WTC11 (cell line): ENCODE measurements at regions of chr5 and their contacts with region 1.

Region 1: DNA sequence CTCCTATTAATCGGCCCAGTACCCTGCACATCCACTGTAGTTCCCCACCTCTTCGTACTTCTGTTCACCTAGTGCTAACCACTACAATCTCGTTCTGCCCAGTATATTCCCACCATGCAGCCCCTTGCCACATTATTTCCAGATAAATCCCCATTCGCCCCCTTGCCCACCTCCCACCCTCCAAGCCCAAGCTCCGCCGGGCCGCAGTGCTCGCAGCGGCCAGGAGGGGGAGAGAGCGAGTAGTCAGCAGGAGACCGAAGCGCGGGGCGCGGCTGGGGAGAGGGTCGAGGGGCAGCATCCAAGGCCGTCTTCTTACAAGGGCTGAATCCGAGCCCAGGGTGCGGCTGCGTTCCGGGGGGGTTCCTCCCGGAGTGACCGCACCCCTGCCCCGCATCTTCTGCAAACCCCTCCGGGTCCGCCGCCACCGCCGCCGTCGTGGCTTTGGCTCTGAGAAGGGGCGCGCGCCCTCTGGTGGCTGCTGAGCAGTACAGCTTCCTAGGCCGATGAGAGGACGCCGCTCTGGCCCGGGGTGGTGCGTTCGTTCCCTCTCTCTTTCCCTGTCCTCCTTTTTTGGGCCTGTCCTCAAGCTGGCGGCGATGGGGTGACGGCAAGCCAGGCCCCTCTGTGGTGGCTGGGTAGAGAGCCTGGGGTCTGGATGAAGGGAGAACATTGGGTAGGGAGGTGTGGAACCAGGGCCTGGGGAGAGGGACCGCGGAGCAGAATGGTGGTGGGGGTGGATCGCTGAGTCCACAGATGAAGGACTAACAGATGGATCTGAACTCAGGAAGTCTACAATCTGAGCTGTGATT is 30.0 kb upstream of the PSD2 start:
- DNase-seq: peak; percentile 84
- ATAC-seq: peak; percentile 84
- H3K4me3 Mint-ChIP-seq: peak overlapping the region; percentile 61
- H3K27ac Mint-ChIP-seq: no peak overlapping the region
- H3K4me1 Mint-ChIP-seq: peaks cover 42% of the 10 kb centered on the region
- H3K27me3 Mint-ChIP-seq: peaks cover 52% of the 10 kb centered on the region
- CTCF ChIP-seq: peak; percentile 97

Region 2: DNA sequence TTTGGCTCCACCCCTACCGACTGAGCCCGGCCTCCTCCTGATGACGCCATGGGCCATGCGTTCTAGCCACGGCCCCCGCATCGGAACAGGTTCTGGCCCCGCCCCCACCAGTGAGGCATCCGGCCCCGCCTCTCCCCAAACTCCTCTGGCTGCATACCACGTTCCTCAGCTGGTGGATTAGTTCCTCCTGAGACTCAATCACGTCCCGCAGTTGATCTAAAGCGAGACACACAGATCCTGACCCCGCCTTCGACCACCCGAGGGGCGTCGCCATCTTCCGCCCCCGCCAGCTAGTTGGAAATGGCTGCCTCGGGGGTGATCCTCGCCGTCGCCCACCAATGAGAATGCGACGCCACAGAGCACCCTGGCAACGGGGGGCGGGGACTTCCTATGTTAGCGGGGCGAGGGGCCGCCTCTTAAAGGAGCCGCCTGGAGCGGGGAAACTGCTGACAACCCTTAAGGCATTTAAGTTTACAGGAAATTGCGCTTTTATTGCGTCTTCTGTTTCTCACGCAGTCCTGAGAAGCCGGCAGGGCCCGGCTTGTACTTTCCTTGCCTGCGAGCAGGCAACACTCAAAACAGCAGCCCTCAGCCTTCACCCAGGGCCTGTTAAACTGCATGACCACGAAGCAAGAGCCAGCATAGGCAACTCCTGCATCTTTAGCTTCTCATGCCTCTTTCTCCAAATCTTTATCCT is 361.7 kb before region 1 on chr5 and contains the start of gene SPATA24:
- CTCF ChIA-PET with region 1: interaction called, 10 read pairs
- POLR2A ChIA-PET with region 1: no interaction called
- DNase-seq: peak; percentile 98
- ATAC-seq: peak; percentile 93
- H3K4me3 Mint-ChIP-seq: peak within 1 kb of the TSS; percentile 94
- H3K27ac Mint-ChIP-seq: peak within 1 kb of the TSS; percentile 100
- H3K4me1 Mint-ChIP-seq: peaks cover 16% of the 10 kb centered on the region
- H3K27me3 Mint-ChIP-seq: no peaks in the 10 kb centered on the region
- CTCF ChIP-seq: no peak
- total RNA-seq, gene SPATA24: 12.9 to 13.9 TPM (median 13.2 TPM) in 3 replicates

Region 3: GRCh38 chr5:139651853-139652787 is 113.5 kb before region 1 on chr5:
- CTCF ChIA-PET with region 1: interaction called, 34 read pairs
- POLR2A ChIA-PET with region 1: interaction called, 3 read pairs
- DNase-seq: peak; percentile 92
- ATAC-seq: peak; percentile 33
- H3K4me3 Mint-ChIP-seq: peak overlapping the region; percentile 98
- H3K27ac Mint-ChIP-seq: peak overlapping the region; percentile 96
- H3K4me1 Mint-ChIP-seq: peaks cover 63% of the 10 kb centered on the region
- H3K27me3 Mint-ChIP-seq: no peaks in the 10 kb centered on the region
- CTCF ChIP-seq: no peak

Region 4: DNA sequence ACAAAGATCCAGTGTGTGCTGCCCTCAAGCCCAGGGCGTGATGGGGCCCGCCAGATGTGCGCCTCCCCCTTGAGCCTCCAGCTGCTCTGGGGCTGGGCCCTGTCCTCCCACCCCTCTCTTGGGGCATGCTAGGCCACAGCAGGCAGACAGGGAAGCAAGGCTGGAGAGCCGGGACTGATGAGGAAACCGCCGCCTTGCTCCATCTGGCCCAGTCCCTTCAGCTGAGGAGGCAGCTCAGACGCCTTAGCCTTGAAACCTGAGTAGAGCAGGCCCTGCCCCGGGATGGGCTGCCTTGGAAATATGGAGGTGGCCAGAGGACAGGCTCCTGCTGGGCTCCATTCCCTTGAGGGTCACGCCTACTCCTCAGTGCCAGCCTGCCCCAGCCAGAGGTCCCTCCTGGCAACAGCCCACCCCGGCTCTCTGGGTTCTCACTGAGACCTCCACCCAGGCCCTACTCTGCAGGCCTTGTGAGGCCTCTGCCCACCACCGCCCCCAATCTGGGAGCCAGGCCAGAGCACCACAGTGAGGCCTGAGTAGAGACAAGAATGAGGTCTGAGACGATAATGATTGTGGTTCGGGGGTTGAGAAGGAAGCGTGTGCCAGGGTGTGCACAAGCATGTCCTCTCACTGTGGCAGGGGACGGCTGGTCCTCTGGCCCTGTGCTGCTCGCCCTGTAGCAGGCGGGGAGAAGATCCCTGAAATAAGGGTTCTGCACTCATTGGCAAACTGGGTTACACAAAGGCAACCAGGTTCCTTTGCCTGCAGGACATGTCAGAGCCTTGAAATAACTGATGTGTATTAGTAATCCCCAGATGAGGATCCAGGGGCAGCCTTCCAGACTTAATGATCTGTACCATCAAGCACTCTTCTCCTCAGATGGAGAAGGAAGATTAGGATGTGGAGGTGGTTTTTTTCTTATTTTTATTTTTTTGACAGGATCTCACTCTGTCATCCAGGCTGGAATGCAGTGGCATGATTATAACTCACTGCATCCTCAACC is 86.6 kb before region 1 on chr5:
- CTCF ChIA-PET with region 1: interaction called, 30 read pairs
- POLR2A ChIA-PET with region 1: no interaction called
- DNase-seq: peak; percentile 38
- ATAC-seq: peak; percentile 50
- H3K4me3 Mint-ChIP-seq: no peak overlapping the region
- H3K27ac Mint-ChIP-seq: no peak overlapping the region
- H3K4me1 Mint-ChIP-seq: peaks cover 48% of the 10 kb centered on the region
- H3K27me3 Mint-ChIP-seq: no peaks in the 10 kb centered on the region
- CTCF ChIP-seq: no peak

Region 5: GRCh38 chr5:139696894-139697658 is 68.5 kb before region 1 on chr5:
- CTCF ChIA-PET with region 1: interaction called, 77 read pairs
- POLR2A ChIA-PET with region 1: no interaction called
- DNase-seq: peak; percentile 77
- ATAC-seq: peak; percentile 23
- H3K4me3 Mint-ChIP-seq: peak overlapping the region; percentile 66
- H3K27ac Mint-ChIP-seq: peak overlapping the region; percentile 88; the same call in 1 of the 2 replicates
- H3K4me1 Mint-ChIP-seq: peaks cover 60% of the 10 kb centered on the region
- H3K27me3 Mint-ChIP-seq: peaks cover 28% of the 10 kb centered on the region
- CTCF ChIP-seq: no peak

Region 6: GRCh38 chr5:139740138-139740991 is 25.2 kb before region 1 on chr5:
- CTCF ChIA-PET with region 1: interaction called, 99 read pairs
- POLR2A ChIA-PET with region 1: no interaction called
- DNase-seq: no peak
- ATAC-seq: no peak
- H3K4me3 Mint-ChIP-seq: no peak overlapping the region
- H3K27ac Mint-ChIP-seq: peak overlapping the region; percentile 24; the same call in 1 of the 2 replicates
- H3K4me1 Mint-ChIP-seq: peaks cover 50% of the 10 kb centered on the region
- H3K27me3 Mint-ChIP-seq: peaks cover 20% of the 10 kb centered on the region
- CTCF ChIP-seq: no peak

Region 7: GRCh38 chr5:139795074-139796001 is 29.7 kb after region 1 on chr5 and contains the start of gene PSD2:
- CTCF ChIA-PET with region 1: interaction called, 21 read pairs
- POLR2A ChIA-PET with region 1: no interaction called
- DNase-seq: peak; percentile 61
- ATAC-seq: peak; percentile 45
- H3K4me3 Mint-ChIP-seq: peak within 1 kb of the TSS; percentile 67
- H3K27ac Mint-ChIP-seq: no peak within 1 kb of the TSS
- H3K4me1 Mint-ChIP-seq: peaks cover 5% of the 10 kb centered on the region; the same call in 1 of the 2 replicates
- H3K27me3 Mint-ChIP-seq: peaks cover 89% of the 10 kb centered on the region
- CTCF ChIP-seq: no peak
- total RNA-seq, gene PSD2: 0.55 to 0.57 TPM (median 0.57 TPM) in 3 replicates